Activated CD8-positive, alpha-beta T cell treated with anti-CD3 and anti-CD28 coated beads for 36 hours (primary cell): ENCODE measurements at regions of chr3 and their contacts with region 1.

Region 1: DNA sequence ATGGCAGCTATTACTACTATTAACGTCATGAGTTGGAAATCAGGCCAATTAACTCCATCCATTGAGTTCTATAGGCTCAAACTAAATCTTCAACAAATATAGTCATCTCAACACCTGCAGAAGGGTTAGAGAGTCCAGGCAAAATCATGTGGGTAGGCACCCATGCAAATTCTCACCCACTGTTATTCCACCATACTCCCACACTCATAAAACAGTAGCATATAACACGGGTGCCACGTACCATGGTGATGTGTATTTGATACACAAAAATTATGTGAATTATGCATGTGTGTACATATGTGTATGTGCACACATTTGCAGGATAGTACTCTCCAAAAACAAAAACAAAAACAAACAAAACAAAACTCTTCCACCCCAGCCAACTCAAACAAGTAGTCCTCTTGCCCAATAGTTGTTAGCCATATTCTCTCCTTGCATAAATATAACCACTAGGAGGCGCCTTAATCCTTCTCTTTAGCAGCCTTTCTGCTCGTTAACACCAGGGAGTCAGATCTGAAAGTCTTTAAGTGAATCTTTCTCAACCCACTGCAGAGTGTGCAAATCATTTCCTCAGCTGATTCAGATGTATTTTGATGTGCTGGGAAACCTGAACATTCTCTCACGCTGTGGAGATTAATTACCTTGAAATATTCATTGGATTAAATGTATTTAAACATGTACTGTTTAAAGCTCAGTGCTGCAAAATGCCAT is 38.0 kb upstream of the COPB2 start:
- DNase-seq: no peak
- ATAC-seq: peak; percentile 67
- H3K4me3 Mint-ChIP-seq: no peak overlapping the region
- H3K27ac Mint-ChIP-seq: no peak overlapping the region
- H3K4me1 Mint-ChIP-seq: no peaks in the 10 kb centered on the region
- H3K27me3 Mint-ChIP-seq: no peaks in the 10 kb centered on the region
- CTCF ChIP-seq: peak; percentile 71

Region 2: DNA sequence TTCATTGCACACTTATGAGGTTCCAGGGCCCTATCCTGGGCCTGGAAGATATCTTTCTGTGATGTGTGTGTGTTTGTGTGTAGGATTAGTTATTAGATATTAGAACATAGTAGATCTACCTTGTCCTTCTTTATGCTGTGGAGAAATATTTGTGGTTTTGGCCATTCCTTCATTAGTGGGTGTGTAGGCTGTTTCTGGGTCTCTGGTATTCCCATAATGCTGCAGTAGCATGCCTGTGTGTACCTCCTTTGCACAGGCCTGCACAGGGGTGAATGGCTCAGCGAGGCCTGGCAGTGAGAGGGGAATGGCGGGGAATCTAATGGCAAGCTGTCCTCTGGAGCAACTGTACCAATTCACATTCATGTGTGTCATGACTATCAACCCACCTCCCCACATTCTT is 209.4 kb before region 1 on chr3:
- CTCF ChIA-PET with region 1: no interaction called
- POLR2A ChIA-PET with region 1: no interaction called
- intact Hi-C with region 1: no loop called
- DNase-seq: no peak
- ATAC-seq: no peak
- H3K4me3 Mint-ChIP-seq: no peak overlapping the region
- H3K27ac Mint-ChIP-seq: no peak overlapping the region
- H3K4me1 Mint-ChIP-seq: no peaks in the 10 kb centered on the region
- H3K27me3 Mint-ChIP-seq: peaks cover 11% of the 10 kb centered on the region
- CTCF ChIP-seq: no peak

Region 3: DNA sequence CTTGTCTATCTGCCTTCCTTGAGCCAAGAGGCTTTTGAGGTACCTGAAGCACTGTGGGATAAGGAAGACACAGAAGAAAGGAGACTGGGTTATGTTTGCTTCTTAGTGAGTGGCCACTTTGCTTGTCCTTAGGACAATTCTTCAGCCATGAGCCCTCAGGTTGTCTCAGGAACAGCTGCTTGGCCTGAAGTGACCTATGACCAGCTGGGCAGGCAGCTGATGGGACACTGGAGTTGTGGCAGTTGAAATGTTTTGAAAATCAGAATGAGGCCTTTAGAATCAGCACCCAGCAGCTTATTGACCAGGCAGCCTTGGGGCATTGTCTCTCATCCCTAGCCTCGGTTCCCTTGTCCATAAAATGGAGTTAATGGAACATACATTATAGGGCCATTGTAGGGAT is 11.8 kb after region 1 on chr3:
- CTCF ChIA-PET with region 1: interaction called, 14 read pairs
- POLR2A ChIA-PET with region 1: no interaction called
- intact Hi-C with region 1: no loop called
- DNase-seq: no peak
- ATAC-seq: no peak
- H3K4me3 Mint-ChIP-seq: no peak overlapping the region
- H3K27ac Mint-ChIP-seq: no peak overlapping the region
- H3K4me1 Mint-ChIP-seq: no peaks in the 10 kb centered on the region
- H3K27me3 Mint-ChIP-seq: no peaks in the 10 kb centered on the region
- CTCF ChIP-seq: no peak

Region 4: GRCh38 chr3:139561959-139562676 is 134.7 kb after region 1 on chr3:
- CTCF ChIA-PET with region 1: interaction called, 10 read pairs
- POLR2A ChIA-PET with region 1: interaction called, 3 read pairs
- intact Hi-C with region 1: loop called (anchors 5 kb)
- DNase-seq: peak; percentile 26
- ATAC-seq: no peak
- H3K4me3 Mint-ChIP-seq: no peak overlapping the region
- H3K27ac Mint-ChIP-seq: no peak overlapping the region
- H3K4me1 Mint-ChIP-seq: no peaks in the 10 kb centered on the region
- H3K27me3 Mint-ChIP-seq: no peaks in the 10 kb centered on the region
- CTCF ChIP-seq: peak; percentile 25

Region 5: GRCh38 chr3:140863580-140864009 is 1436.2 kb after region 1 on chr3:
- CTCF ChIA-PET with region 1: no interaction called
- POLR2A ChIA-PET with region 1: no interaction called
- intact Hi-C with region 1: loop called (anchors 10 kb)
- DNase-seq: peak; percentile 69
- ATAC-seq: no peak
- H3K4me3 Mint-ChIP-seq: no peak overlapping the region
- H3K27ac Mint-ChIP-seq: no peak overlapping the region
- H3K4me1 Mint-ChIP-seq: no peaks in the 10 kb centered on the region
- H3K27me3 Mint-ChIP-seq: peaks cover 4% of the 10 kb centered on the region
- CTCF ChIP-seq: peak; percentile 74